ENCODE measurements at regions of chr22 and their contacts with region 1.

Region 1: DNA sequence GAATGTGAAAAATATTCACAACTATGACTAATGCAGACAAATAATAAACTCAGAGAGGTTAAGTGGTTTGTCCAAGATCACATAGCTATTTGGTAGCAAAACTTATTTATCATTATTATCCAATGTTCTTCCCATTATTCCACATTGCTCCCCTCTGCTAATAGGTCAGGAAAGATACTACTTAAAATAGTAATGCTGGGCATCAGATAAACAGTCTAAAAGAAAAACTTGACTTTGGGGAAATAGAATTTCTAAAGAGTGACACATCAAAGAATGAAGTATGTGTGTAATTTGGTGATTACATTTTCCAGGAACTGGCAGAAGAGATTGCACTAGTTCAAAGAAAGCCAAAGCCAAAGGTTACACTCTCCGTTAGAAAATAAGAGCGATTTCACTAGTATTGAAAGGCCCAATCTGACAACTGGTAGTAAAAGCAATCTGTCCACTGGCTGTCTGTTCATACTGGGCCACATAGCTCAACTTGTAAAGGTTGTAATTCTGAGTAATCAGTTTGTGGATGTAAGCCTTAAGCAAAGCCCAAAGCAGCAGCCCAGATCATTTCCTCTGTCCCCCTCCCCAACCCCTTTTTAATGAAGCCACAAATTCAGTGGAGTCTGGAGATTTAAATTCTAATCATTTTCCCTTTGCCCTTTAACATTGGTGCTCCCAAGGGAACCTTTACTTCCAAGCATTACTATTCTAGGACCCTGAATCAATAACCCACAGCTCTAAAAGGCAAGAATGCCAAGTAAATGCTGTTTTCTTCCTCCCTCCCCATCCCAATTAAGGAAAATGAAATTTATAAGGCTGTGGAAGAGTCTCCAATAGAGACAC is 283.5 kb downstream of the TTC28 start:
- DNase-seq: peak; percentile 22
- H3K4me3 Mint-ChIP-seq: no peak overlapping the region
- H3K27ac Mint-ChIP-seq: peak overlapping the region; percentile 73
- H3K4me1 Mint-ChIP-seq: peaks cover 11% of the 10 kb centered on the region
- H3K27me3 Mint-ChIP-seq: no peaks in the 10 kb centered on the region

Region 2: DNA sequence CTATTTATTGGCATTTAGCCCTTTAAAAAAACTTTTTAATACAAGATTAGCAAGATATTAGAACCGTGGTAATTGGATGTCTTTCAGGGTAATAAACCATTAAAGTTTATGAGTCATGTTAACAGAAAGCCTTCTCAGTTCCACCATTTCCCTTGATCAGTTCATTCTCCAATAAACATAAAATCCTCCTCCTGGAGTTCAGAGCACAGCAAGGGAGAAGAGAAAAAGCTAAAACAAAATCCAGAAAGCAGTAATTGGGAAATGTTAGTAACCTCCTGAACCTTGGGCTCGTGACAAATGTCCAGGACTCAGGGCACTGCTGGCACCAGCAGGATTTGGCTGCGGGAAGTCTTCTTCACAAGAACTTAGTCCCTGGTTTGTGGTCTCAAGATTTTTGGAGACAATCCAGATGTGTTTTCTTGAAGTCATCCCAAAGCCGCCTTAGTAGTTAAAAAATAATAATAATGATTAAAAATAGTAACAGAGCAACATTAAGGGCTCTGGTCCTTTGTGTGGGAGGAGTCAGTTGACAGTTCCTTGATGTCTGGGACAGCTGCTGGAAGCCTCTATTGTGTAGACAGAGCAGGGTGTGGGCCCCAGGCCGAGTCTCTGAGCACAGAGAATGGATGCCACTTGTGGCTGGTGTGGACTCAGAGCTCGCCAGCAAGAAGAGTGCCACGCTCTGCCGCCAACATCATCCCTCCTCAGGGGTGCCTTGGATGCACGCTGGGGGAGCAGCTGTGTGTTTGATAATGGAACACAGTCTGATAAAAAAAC is 433.7 kb before region 1 on chr22:
- CTCF ChIA-PET with region 1: no interaction called
- intact Hi-C with region 1: no loop called
- DNase-seq: no peak
- H3K4me3 Mint-ChIP-seq: no peak overlapping the region
- H3K27ac Mint-ChIP-seq: no peak overlapping the region
- H3K4me1 Mint-ChIP-seq: no peaks in the 10 kb centered on the region
- H3K27me3 Mint-ChIP-seq: no peaks in the 10 kb centered on the region

Region 3: DNA sequence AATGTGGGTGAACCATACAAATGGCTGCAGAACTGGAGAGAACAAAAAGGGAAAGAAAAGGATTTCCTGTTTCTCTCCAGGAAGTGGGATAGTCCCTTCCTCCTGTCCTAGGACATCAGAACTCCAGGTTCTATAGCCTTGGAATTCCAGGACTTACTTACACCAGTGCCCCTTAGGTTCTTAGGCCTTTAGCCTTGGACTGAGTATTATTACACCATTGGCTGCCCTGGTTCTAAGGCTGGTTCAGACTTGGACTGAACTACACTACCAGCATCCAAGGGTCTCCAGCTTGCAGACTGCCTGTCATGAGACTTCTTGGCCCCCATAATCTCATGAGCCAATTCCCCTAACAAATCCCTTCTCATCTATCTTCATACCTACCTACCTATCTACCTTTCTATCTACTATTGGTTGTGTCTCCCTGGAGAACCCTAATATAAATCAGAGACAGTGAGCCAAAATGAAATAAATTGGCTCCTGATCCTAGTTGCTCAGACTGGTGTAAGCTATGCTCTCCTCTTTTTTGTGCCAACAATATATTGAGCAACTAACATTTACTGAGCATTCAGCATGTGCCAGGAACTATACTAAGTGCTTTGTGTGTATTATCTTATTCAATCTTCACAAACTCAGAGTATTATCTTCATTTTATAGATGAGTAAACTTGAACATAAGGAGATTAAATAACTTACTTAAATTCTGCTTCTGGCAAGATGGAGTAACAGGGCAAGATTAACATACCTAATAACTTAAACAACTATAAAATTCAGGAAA is 20.2 kb before region 1 on chr22:
- CTCF ChIA-PET with region 1: no interaction called
- intact Hi-C with region 1: loop called (anchors 2 kb)
- DNase-seq: no peak
- H3K4me3 Mint-ChIP-seq: no peak overlapping the region
- H3K27ac Mint-ChIP-seq: no peak overlapping the region
- H3K4me1 Mint-ChIP-seq: peaks cover 21% of the 10 kb centered on the region
- H3K27me3 Mint-ChIP-seq: no peaks in the 10 kb centered on the region

Region 4: DNA sequence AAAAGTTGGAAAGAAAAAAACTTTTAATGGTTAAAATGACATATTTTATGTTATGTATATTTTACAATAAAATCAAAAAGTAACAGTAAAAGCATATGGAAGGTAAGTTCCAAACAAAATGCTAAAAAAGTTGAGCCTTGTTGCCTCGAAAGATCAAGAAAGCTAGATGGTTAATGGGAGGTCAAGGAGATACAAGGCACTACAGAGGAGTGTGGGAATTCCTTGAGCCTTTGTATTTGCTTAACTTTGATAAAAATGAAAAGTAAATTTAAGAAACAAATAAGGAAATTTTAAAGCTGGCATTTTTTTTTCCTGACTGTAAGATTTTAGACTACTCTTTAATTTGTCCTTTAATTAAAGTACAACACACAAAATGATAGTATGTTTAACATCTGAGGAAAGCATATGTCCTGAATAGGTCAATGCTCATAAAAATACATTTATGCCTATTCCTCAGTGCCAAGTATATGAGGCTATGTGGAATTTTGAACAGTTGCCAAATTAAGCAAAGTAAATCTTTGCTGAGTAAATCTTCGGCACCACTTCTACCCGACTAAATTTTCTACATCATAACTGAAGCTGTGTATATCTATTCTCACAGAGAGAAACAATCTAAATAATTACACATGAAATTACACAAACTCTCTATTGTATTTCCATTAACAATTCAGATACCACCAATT is 174.7 kb after region 1 on chr22:
- CTCF ChIA-PET with region 1: no interaction called
- intact Hi-C with region 1: no loop called
- DNase-seq: no peak
- H3K4me3 Mint-ChIP-seq: no peak overlapping the region
- H3K27ac Mint-ChIP-seq: no peak overlapping the region
- H3K4me1 Mint-ChIP-seq: no peaks in the 10 kb centered on the region
- H3K27me3 Mint-ChIP-seq: peaks cover 9% of the 10 kb centered on the region

Region 5: DNA sequence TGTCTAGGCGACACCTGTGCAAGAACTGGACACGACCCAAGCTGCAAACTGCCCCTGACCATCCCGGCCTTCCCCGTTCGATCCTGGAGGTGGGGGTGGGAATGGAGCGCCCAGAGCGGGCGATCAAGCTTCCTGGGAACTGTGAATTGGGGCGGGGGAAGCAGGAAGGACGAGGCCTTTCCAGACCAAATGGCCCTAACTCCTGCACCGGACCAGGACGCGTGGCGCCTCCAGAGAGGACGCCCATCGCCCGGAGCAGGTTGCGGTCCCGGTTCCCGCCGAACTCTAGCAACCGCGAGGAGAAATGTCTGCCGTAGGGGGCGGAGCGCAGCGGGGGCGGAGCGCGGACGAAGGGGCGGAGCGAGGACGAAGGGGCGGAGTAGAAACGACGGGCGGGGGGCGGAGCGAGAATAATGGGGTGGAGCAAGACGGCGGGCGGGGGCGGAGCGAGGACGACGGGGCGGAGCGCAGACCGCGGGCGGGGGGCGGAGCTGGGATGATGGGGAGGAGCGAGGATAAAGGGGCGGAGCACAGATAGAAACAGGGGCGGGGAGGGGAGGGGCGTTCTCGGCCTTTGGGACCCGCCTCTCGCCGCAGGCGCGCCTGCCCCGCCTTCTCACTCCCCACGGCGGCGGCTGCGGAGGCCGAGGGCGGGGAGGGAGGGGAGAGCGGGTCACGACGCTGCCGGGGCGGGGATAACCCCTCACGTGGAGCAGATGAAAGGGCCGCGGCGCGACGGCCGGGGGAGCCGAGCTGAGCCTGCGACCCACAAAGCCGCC is 486.9 kb after region 1 on chr22 and contains the start of gene ZNRF3:
- CTCF ChIA-PET with region 1: no interaction called
- intact Hi-C with region 1: no loop called
- DNase-seq: peak; percentile 92
- H3K4me3 Mint-ChIP-seq: peak within 1 kb of the TSS; percentile 81
- H3K27ac Mint-ChIP-seq: no peak within 1 kb of the TSS
- H3K4me1 Mint-ChIP-seq: peaks cover 19% of the 10 kb centered on the region
- H3K27me3 Mint-ChIP-seq: peaks cover 17% of the 10 kb centered on the region
- total RNA-seq, gene ZNRF3: 1.6 to 2.2 TPM

Measured in activated naive CD4-positive, alpha-beta T cell treated with anti-CD3 and anti-CD28 coated beads for 36 hours (primary cell).